Tibial artery (tissue), 4 donors: ENCODE measurements at regions of chr4 and their contacts with region 1.

Region 1: DNA sequence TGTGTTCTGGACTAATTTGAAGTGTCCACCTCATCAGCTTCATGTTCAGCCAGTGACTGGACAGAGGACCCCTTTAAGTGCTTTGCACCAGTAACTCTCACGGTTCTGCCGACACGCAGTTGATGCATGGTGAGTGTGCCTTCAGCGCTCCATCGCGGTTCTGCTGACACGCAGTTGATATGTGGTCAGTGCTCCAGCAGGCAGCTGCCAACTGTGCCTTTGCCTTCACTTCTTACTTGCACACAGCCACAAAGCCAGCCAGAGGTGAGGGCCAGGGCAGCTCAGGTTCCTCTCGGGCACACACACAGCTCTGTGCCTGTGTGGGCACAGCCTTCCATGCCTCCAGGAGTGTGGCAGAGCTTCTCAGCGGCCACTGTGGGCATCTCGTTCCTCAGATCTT is 12.4 kb downstream of the NKX1-1 start:
- DNase-seq: no peak
- H3K4me3 ChIP-seq: no peak overlapping the region
- H3K27ac ChIP-seq: no peak overlapping the region
- H3K4me1 ChIP-seq: no peaks in the 10 kb centered on the region
- H3K27me3 ChIP-seq: peaks cover 0 to 2% of the 10 kb centered on the region in 2 donors
- CTCF ChIP-seq: no peak

Region 2: GRCh38 chr4:1218634-1219565 is 175.0 kb before region 1 on chr4:
- intact Hi-C with region 1: no loop called
- DNase-seq: no peak
- H3K4me3 ChIP-seq: no peak overlapping the region
- H3K27ac ChIP-seq: no peak overlapping the region
- H3K4me1 ChIP-seq: no peaks in the 10 kb centered on the region
- H3K27me3 ChIP-seq: no peaks in the 10 kb centered on the region
- CTCF ChIP-seq: no peak

Region 3: DNA sequence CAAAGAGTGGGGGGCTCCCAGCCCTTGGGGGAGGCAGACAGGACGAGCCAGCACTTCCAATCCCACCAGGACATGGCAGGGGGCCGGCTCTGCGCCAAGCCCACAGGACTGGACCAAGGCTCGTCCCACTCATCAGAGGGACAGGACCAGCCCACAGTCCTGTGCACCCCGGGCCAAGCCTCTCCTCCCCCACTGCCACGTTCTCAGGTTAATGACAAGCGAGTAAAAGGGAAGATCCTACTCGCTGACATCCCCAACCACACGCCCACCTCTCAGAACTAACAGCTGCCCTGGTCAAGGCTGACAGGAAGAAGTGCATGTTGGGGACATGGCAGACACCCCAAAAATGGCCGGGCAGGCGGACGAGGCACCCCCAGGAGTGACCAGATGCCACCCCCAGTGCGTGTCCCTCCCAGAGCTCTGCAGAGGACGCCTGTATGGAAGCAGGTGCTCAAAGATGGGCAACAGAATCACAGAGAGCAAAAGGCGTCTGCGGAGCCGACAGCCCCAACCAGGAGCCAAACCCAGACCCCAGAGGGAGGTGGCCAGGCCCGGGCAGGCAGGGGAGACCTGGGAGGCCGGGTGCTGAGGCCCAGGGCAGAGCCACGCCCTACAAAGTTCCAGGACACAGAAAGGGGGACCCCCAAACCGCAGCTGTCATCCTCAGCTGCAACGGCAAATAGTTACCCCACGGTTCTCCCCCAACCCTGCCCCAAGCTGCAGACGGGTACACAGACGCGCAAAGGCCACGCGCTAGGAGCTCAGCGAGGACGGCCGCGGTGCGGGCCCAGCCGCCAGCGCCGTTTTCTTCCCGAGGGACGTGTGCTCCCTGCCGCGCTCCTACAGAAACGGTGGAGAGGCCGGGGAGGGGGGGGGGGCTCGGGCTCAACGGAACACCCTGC is 146.7 kb before region 1 on chr4:
- intact Hi-C with region 1: no loop called
- DNase-seq: peak; percentile 21 to 62
- H3K4me3 ChIP-seq: peak overlapping the region; percentile 61 to 67
- H3K27ac ChIP-seq: peak overlapping the region; percentile 85 to 96
- H3K4me1 ChIP-seq: peaks cover 15 to 69% (median 59%) of the 10 kb centered on the region in 4 donors
- H3K27me3 ChIP-seq: no peaks in the 10 kb centered on the region
- CTCF ChIP-seq: no peak

Region 4: DNA sequence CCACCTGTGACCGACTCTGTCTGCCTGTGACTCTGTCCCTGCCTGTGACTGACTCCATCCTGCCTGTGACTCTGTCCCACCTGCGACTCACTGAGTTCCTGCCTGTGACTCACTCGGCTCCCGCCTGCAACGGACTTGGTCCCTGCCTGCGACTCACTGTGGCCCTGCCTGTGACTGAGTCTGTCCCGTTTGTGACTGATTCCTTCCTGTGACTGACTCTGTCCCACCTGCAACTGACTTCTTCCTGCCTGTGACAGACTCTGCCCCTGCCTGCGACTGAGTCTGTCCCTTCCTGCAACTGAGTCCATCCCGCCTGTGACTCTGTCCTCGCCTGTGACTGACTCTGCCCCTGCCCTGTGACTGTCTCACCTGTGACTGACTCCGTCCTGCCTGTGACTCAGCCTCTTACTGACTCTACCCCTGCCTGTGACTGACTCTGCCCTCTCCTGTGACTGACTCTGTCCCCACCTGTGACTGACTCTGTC is 56.4 kb before region 1 on chr4:
- intact Hi-C with region 1: no loop called
- DNase-seq: no peak
- H3K4me3 ChIP-seq: no peak overlapping the region
- H3K27ac ChIP-seq: no peak overlapping the region
- H3K4me1 ChIP-seq: no peaks in the 10 kb centered on the region
- H3K27me3 ChIP-seq: no peaks in the 10 kb centered on the region
- CTCF ChIP-seq: no peak

Region 5: DNA sequence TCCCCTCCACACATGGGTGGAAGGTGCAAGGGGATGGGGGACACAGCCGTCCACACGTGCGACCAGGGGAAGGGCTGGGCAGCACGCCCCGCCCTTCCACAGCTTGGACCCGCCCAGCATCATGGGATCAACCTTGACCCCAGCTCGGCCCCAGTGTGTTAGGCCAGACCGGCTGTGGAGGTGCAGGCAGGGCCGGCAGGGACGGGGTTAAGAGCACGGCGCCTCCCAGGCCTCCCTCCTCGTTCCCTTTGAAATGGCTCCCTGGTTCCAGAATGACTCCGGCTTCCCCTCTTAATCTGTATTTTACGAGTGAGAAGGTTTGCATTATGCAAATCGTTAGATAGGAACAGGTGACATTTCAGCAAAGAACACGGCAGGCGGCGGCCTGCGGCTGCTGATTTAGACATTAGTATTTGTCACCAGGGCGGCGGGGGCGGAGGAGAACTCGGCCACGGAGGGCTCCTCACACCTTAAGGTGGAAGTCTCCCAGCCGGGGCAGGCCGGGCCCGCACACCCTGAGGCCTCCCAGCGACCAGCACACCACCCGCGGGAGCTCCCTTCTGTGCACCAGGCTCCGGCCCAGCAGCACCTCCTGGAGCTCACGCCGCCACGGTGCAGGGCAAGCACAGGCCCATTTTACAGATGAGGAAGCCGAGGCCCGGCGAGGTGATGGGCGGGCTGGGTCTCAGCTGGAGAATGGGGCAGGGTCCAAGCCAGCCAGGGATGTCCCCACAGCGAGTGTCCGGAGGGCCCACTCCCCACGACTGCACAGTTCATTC is 174.1 kb after region 1 on chr4:
- intact Hi-C with region 1: no loop called
- DNase-seq: no peak
- H3K4me3 ChIP-seq: no peak overlapping the region
- H3K27ac ChIP-seq: no peak overlapping the region
- H3K4me1 ChIP-seq: peaks cover 0 to 10% (median 0%) of the 10 kb centered on the region in 4 donors
- H3K27me3 ChIP-seq: peaks cover 0 to 70% of the 10 kb centered on the region in 2 donors
- CTCF ChIP-seq: no peak

Region 6: DNA sequence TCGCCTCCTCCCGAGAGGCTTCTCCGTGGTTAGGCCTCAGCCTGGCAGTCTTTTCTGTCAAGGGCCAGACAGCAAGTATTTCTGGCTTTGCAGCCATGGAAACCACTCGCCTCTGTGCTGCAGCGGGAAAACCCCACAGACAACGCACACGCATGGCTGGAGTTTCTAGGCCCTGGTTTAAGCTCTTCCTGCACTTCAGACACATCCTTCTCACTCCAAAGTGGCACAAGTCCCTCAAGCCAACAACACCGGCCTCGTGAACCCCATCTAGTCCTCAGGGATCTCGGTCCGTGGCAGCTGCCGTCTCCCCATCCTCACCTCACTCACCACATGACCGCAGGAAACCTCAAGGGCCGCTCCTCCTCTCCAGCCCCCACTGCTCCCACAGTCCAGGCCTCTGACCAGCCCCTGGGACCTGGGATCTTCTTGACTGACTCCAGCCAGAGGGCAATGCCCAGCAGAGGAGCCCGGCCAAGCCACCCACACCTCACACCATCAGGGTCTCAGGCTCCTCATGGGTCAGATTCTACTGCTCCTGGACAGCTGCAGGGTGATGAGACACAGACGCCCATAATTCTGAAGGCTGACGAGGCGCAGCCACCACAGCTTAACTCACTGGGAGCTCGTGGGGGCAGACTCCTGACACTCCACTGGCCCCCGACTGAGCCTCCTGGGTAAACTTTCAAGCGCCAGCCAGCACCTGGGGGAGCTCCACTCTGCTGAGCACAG is 440.3 kb after region 1 on chr4:
- intact Hi-C with region 1: loop called (anchors 5 kb)
- DNase-seq: no peak
- H3K4me3 ChIP-seq: no peak overlapping the region
- H3K27ac ChIP-seq: no peak overlapping the region
- H3K4me1 ChIP-seq: no peaks in the 10 kb centered on the region
- H3K27me3 ChIP-seq: no peaks in the 10 kb centered on the region
- CTCF ChIP-seq: no peak